Posterior vena cava (tissue), 2 donors: ENCODE measurements at regions of chr2 and their contacts with region 1.

Region 1: GRCh38 chr2:65177751-65178442 is 48.0 kb upstream of the RAB1A start:
- DNase-seq: no peak

Region 2: DNA sequence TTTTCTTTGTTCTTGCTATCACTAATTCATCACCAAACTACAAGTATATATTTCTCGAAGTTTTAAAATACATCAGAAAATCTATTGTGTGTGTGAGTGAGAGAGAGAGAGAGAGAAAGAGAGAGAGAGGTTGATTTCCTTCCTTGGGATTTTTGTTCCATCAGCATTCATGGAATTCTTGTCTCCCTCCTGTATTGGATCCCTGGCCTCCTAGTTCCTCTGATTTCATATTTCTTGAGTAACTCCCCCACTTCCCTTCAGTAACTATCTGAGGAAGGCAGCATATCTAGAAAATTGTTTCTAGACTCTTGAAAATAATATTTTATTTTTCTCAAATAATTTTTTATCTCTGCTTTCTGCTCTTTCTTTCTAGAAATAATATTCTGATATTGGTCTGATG is 36.5 kb after region 1 on chr2:
- intact Hi-C with region 1: loop called in 1 of 2 experiments (anchors 1 kb)
- DNase-seq: no peak